ENCODE measurements at regions of chr7 and their contacts with region 1.

Region 1: DNA sequence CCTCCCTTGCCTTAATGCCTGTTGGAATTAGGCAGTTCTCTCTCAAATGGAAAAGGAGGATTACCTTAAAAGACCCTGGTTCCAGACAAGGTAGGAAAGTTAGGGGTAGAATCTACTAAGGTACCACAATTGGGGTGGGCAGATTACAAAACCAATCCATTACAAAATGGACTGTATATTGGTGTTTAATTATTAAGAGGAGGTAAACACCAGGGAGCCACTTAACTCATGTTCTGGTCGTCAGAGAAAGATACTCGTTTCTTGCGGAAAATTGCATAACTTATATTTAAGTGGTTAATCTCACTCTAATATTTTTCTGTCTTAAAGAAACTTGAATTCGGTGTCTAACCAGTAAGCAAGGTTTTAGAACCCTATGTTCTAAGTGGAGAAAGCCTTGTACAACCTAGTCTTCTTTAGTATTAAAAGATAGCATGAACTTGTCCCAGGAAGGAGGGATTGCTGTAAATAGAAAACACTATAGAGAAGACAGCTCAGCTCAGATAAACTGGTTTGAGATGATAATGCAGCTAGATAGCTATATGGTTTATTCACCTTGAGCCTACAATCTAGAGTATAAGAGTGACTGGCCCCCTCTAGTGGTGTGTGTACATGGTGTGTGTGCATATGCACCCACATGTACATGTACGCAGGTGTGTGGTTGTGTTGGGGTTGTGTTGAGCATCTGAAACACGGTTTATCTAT is 58.0 kb upstream of the STRIP2 start:
- DNase-seq: peak in 1 of 2 experiments; percentile 15
- H3K4me3 ChIP-seq: no peak overlapping the region
- H3K27ac ChIP-seq: no peak overlapping the region
- H3K4me1 ChIP-seq: peaks cover 11% of the 10 kb centered on the region
- H3K27me3 ChIP-seq: no peaks in the 10 kb centered on the region
- CTCF ChIP-seq: peak; percentile 62

Region 2: DNA sequence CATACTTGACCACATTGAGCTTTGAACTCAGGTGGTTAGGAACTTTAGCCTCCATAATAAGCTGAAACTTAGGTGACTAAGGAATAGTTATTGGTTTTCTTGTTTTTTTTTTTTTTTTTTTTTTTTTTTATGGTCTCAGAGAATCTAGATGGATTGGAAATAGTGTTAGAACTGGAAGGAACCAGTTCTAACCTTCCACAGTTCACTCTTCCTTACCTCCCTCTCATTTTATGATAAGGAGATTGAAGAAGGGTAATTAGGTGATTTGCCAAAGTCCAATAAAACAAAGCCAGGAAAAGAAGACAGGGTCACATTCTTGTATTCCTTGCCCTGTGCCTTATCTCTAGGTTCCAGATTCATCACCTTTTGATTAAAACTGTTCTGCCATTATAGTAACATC is 13.7 kb before region 1 on chr7:
- CTCF ChIA-PET with region 1: interaction called, 21 read pairs
- POLR2A ChIA-PET with region 1: no interaction called
- intact Hi-C with region 1: no loop called
- DNase-seq: no peak
- H3K4me3 ChIP-seq: no peak overlapping the region
- H3K27ac ChIP-seq: no peak overlapping the region
- H3K4me1 ChIP-seq: peaks cover 8% of the 10 kb centered on the region
- H3K27me3 ChIP-seq: no peaks in the 10 kb centered on the region
- CTCF ChIP-seq: no peak

Region 3: DNA sequence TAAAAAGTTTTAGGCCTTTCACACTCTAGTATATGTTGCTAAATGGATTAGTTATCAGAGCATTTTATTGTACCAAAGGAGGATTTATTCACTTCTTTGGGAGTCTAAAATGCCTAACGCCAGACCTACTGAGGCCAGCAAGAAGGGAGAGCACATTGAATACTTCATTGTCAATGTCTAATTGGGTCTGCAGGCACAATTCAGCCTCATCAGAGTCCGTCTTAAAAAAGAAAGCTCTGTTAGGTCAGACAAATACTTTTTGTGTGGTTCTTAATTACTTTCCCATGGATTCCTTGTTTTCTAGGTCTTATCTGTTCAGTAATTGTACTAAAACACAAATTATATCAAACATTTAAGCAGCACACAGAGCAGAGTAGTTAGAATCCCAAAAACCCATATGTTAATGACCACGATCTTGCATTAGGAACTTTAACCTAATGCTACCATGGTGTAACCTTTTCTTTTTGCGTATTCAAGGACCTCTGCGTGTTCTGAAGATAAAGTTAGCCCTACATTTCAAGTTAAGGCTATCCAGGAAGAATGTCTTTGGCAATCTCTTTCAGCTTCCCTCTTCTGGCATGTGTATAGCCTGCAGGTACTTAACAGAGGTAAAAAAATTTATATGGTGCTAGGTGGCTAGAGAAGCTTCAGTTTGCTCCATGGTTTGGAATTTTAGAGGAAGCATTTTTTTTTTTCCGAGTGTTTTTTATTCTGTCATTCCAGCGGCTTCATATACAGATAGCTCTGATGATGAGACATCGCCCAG is 12.3 kb after region 1 on chr7:
- CTCF ChIA-PET with region 1: interaction called, 11 read pairs
- POLR2A ChIA-PET with region 1: interaction called, 28 read pairs
- intact Hi-C with region 1: no loop called
- DNase-seq: no peak
- H3K4me3 ChIP-seq: no peak overlapping the region
- H3K27ac ChIP-seq: no peak overlapping the region
- H3K4me1 ChIP-seq: no peaks in the 10 kb centered on the region
- H3K27me3 ChIP-seq: no peaks in the 10 kb centered on the region
- CTCF ChIP-seq: no peak

Region 4: DNA sequence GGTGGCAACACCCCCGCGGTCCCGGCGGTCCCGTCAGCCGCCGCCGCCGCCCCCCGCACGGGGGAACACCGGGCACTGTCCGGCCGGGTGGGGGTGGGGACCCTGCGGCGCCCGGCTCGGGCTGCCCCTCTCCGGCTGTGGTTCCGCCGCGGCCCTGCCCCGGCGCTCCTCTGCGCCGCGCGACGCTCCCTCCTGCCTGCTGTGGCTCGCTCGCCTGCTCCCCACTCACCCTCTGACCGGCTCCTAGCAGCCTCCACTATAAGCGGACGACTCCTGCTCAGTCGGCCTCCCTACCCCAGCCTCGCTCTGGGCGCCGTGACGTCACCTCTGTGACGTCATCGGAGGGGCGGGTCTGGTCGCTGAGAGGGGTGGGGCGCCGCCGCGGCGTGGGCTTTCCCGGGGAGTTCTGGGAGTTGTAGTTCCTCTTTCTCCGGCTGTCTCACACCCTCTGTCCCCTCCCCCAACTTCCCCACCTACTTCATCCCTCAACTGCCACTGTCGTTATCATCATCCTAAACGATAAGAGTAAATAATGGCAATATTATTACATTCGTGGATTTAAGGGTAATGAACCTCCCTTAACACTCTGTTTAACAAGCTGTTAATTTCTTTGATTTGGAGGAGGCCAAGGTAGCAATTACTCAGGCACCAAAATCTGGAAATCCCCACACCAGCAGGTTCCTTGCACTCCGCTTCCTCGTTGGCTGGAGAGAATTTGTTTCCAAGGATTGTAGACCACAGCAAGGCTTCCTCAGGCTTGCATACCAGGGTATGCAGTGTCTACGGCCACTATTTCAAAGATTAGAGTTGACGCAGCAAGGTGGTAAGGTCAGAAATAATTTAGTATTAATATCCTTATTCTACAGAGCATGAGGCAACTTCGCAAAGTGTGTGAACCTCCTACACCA is 576.7 kb after region 1 on chr7 and contains the start of gene UBE2H:
- CTCF ChIA-PET with region 1: no interaction called
- POLR2A ChIA-PET with region 1: no interaction called
- intact Hi-C with region 1: no loop called
- DNase-seq: peak; percentile 68 to 89
- H3K4me3 ChIP-seq: peak within 1 kb of the TSS; percentile 76
- H3K27ac ChIP-seq: peak within 1 kb of the TSS; percentile 100
- H3K4me1 ChIP-seq: peaks cover 42% of the 10 kb centered on the region
- H3K27me3 ChIP-seq: no peaks in the 10 kb centered on the region
- CTCF ChIP-seq: no peak
- total RNA-seq, gene UBE2H: 211 TPM in 2 replicates

Measured in PC-9 (cell line).